ENCODE measurements at regions of chr19 and their contacts with region 1.

Region 1: GRCh38 chr19:16076154-16076957 is at the start of gene TPM4:
- DNase-seq: peak; percentile 77
- ATAC-seq: peak; percentile 53
- H3K4me3 Mint-ChIP-seq: peak within 1 kb of the TSS; percentile 90
- H3K27ac Mint-ChIP-seq: peak within 1 kb of the TSS; percentile 98
- H3K4me1 Mint-ChIP-seq: peaks cover 57% of the 10 kb centered on the region
- H3K27me3 Mint-ChIP-seq: no peaks in the 10 kb centered on the region
- CTCF ChIP-seq: no peak
- total RNA-seq, gene TPM4: 238 and 257 TPM in 2 replicates

Region 2: GRCh38 chr19:15976836-15977689 is 99.3 kb before region 1 on chr19:
- CTCF ChIA-PET with region 1: no interaction called
- POLR2A ChIA-PET with region 1: no interaction called
- intact Hi-C with region 1: no loop called
- DNase-seq: no peak
- ATAC-seq: no peak
- H3K4me3 Mint-ChIP-seq: no peak overlapping the region
- H3K27ac Mint-ChIP-seq: no peak overlapping the region
- H3K4me1 Mint-ChIP-seq: no peaks in the 10 kb centered on the region
- H3K27me3 Mint-ChIP-seq: peaks cover 28% of the 10 kb centered on the region
- CTCF ChIP-seq: no peak

Region 3: DNA sequence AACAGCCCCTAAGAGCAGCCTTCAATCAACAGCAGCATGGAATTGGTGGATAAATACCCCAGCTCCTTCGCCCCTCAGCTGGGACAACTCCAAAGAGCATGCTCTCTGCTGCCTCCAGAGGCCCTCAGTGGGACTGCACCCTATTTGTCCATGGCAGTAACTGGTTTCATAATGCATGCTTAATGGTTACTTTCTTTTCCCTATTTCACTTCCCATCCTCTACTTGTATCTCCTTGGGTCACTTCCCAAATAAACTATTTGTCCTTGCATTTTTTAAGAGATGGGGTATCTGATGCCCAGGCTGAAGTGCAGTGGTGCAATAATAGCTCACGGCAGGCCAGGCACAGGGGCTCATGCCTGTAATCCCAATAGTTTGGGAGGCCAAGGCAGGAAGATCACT is 13.6 kb before region 1 on chr19:
- CTCF ChIA-PET with region 1: interaction called, 9 read pairs
- POLR2A ChIA-PET with region 1: interaction called, 17 read pairs
- intact Hi-C with region 1: no loop called
- DNase-seq: peak; percentile 63
- ATAC-seq: peak; percentile 92
- H3K4me3 Mint-ChIP-seq: no peak overlapping the region
- H3K27ac Mint-ChIP-seq: no peak overlapping the region
- H3K4me1 Mint-ChIP-seq: peaks cover 10% of the 10 kb centered on the region
- H3K27me3 Mint-ChIP-seq: peaks cover 3% of the 10 kb centered on the region
- CTCF ChIP-seq: peak; percentile 80

Region 4: DNA sequence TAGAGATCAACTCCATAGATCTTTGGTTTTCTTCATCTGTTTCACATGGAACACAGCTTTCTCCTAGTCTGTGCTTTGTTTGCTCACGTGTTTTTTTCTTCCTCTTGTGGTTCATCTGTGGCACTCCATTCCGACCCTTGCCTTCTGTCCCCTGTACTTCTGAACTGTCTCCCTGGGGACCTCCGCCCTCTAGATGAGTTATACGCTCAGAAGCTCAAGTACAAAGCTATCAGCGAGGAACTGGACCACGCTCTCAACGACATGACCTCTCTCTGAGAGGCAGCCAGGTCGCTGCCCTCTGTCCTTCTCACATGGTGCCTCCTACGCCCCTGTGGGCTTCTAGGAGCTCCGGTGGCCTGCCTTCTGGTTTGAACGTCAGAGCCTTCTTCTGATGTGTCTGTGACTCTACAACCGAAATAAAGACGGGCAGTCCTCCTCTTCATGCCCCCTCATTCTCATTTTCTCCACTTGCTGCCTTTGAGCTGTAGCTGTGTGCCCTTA is 18.8 kb after region 1 on chr19:
- CTCF ChIA-PET with region 1: interaction called, 3 read pairs
- POLR2A ChIA-PET with region 1: interaction called, 24 read pairs
- intact Hi-C with region 1: no loop called
- DNase-seq: no peak
- ATAC-seq: peak; percentile 81
- H3K4me3 Mint-ChIP-seq: no peak overlapping the region
- H3K27ac Mint-ChIP-seq: peak overlapping the region; percentile 57
- H3K4me1 Mint-ChIP-seq: peaks cover 13% of the 10 kb centered on the region
- H3K27me3 Mint-ChIP-seq: no peaks in the 10 kb centered on the region
- CTCF ChIP-seq: no peak

Region 5: GRCh38 chr19:16118489-16119033 is 42.2 kb after region 1 on chr19:
- CTCF ChIA-PET with region 1: no interaction called
- POLR2A ChIA-PET with region 1: interaction called, 88 read pairs
- intact Hi-C with region 1: loop called (anchors 1 kb)
- DNase-seq: peak; percentile 76
- ATAC-seq: peak; percentile 87
- H3K4me3 Mint-ChIP-seq: peak overlapping the region; percentile 73
- H3K27ac Mint-ChIP-seq: peak overlapping the region; percentile 98
- H3K4me1 Mint-ChIP-seq: peaks cover 80% of the 10 kb centered on the region
- H3K27me3 Mint-ChIP-seq: no peaks in the 10 kb centered on the region
- CTCF ChIP-seq: no peak

Region 6: DNA sequence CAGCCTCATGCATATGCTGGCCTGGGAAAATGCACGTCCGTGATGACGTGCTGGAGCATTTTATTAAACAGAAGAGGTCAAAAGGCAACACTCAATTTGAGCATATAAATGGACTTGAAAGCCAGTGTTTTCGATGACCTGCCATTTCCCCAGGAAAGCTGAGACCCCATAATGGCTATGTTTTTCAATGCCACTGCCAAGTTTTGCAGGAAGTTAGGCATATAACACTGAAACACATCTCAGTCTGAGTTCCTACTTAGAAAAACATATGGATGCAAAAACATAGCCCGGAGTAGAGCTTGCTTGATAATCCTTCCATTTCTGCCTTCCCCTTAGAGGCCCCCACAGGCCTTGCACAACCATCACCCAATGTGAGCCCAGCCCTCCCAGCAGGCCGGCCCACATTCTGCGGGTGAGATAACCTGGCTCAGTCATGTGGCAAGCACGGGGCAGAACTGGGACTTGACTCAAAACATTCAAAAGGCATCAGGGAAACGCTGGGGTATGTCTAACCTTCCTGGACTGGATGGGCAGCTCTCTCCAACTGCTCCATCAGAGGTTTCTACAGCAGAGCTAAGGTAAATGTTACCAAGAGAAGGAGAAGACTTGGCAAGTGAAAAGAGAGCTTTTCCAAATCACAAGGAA is 370.5 kb after region 1 on chr19:
- CTCF ChIA-PET with region 1: no interaction called
- POLR2A ChIA-PET with region 1: interaction called, 3 read pairs
- intact Hi-C with region 1: loop called (anchors 2 kb)
- DNase-seq: peak; percentile 52
- ATAC-seq: peak; percentile 43
- H3K4me3 Mint-ChIP-seq: peak overlapping the region; percentile 64
- H3K27ac Mint-ChIP-seq: peak overlapping the region; percentile 95
- H3K4me1 Mint-ChIP-seq: peaks cover 94% of the 10 kb centered on the region
- H3K27me3 Mint-ChIP-seq: no peaks in the 10 kb centered on the region
- CTCF ChIP-seq: no peak